Psoas muscle (tissue), 8 donors: ENCODE measurements at regions of chr12 and their contacts with region 1.

Region 1: DNA sequence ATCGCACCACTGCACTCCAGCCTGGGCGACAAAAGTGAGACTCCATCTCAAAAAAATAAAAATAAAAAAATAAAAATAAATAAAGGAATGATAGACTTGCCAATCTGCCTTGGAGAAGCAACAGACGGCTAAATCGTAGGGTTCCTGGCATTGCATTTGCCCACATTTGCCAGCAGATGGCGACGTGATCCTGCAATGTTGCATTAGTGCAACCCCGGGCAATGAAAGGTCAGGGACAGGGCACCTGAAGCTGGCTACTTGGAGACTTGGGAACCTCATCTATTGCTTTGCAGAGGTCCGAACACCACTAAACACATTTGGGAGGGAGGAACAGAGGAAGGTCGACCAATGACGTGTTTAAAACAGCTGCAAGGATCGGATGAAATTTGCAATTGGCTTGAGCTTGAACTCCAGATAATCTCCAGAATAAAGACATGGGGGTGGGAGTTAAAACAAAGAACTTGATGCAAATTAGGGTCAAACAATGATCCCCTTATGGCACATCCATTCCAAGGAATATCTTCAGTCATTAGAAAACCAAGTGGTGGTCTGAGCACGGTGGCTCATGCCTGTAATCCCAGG is 34.6 kb downstream of the SPRING1 start:
- DNase-seq: peak; percentile 53 to 79
- ATAC-seq: peak; percentile 80 to 94 (median 88)
- H3K4me3 ChIP-seq: no peak overlapping the region
- H3K27ac ChIP-seq: no peak overlapping the region
- H3K4me1 ChIP-seq: no peaks in the 10 kb centered on the region
- H3K27me3 ChIP-seq: no peaks in the 10 kb centered on the region
- CTCF ChIP-seq: peak; percentile 92

Region 2: GRCh38 chr12:115998119-115998633 is 705.1 kb before region 1 on chr12:
- intact Hi-C with region 1: loop called in 1 of 2 experiments (anchors 10 kb)
- DNase-seq: no peak
- ATAC-seq: peak; percentile 55 to 74 (median 60)
- H3K4me3 ChIP-seq: no peak overlapping the region
- H3K27ac ChIP-seq: peak overlapping the region; percentile 5
- H3K4me1 ChIP-seq: peaks cover 30% of the 10 kb centered on the region
- H3K27me3 ChIP-seq: no peaks in the 10 kb centered on the region
- CTCF ChIP-seq: peak; percentile 85

Region 3: GRCh38 chr12:116880817-116881324 is 177.6 kb after region 1 on chr12:
- intact Hi-C with region 1: loop called in 1 of 2 experiments (anchors 5 kb)
- DNase-seq: peak in 1 of 2 donors; percentile 58
- ATAC-seq: peak; percentile 84 to 93 (median 90)
- H3K4me3 ChIP-seq: peak overlapping the region; percentile 62
- H3K27ac ChIP-seq: no peak overlapping the region
- H3K4me1 ChIP-seq: peaks cover 34% of the 10 kb centered on the region
- H3K27me3 ChIP-seq: peaks cover 0 to 70% (median 38%) of the 10 kb centered on the region in 3 donors
- CTCF ChIP-seq: no peak

Region 4: GRCh38 chr12:116955382-116956021 is 252.2 kb after region 1 on chr12:
- intact Hi-C with region 1: loop called (anchors 5 to 10 kb)
- DNase-seq: no peak
- ATAC-seq: peak; percentile 73 to 90 (median 80)
- H3K4me3 ChIP-seq: no peak overlapping the region
- H3K27ac ChIP-seq: peak overlapping the region; percentile 53
- H3K4me1 ChIP-seq: peaks cover 32% of the 10 kb centered on the region
- H3K27me3 ChIP-seq: no peaks in the 10 kb centered on the region
- CTCF ChIP-seq: peak; percentile 33

Region 5: DNA sequence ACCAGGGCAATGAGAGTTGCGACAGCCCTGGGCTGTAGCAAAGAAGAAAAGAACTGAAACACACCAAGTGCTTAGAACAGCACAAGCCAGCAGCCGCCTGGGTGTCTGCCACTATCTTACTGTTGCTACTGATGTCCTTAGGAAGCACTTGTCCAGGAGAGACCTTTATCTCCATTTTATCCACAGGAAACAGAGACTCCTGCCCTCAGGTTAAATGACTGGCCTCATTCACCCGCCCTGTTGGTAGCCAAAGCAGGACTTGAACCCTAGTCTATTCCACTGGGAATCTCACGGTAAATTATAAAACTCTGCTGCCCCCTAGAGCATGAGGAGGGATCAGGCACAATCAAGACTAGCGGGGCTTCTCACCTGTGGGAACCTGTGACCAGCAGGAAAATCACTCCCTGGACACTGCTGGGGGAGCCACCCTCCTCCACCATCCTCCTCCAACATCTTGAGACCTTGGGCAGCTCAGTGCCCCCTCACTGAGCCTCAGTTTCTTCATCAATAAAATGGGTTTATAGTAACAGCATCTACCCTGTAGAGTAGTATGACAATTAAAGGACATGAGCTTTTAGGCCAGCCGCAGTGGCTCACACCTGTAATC is 416.4 kb after region 1 on chr12:
- intact Hi-C with region 1: loop called (anchors 5 to 10 kb)
- DNase-seq: peak; percentile 37 to 71
- ATAC-seq: peak in 2 of 4 donors; percentile 41 to 61
- H3K4me3 ChIP-seq: no peak overlapping the region
- H3K27ac ChIP-seq: no peak overlapping the region
- H3K4me1 ChIP-seq: no peaks in the 10 kb centered on the region
- H3K27me3 ChIP-seq: no peaks in the 10 kb centered on the region
- CTCF ChIP-seq: peak; percentile 50